ENCODE measurements at regions of chr3 and their contacts with region 1.

Region 1: GRCh38 chr3:132535575-132536441 is 61.3 kb upstream of the ACKR4 start:
- DNase-seq: peak; percentile 70 to 74
- ATAC-seq: peak; percentile 91
- H3K4me3 ChIP-seq: no peak overlapping the region
- H3K27ac ChIP-seq: peak overlapping the region in 1 of 2 donors; percentile 86
- H3K4me1 ChIP-seq: no peaks in the 10 kb centered on the region
- H3K27me3 ChIP-seq: no peaks in the 10 kb centered on the region

Region 2: GRCh38 chr3:132615881-132616280 is 80.1 kb after region 1 on chr3:
- intact Hi-C with region 1: no loop called
- DNase-seq: no peak
- ATAC-seq: no peak
- H3K4me3 ChIP-seq: no peak overlapping the region
- H3K27ac ChIP-seq: no peak overlapping the region
- H3K4me1 ChIP-seq: peaks cover 2 to 3% of the 10 kb centered on the region in 2 donors
- H3K27me3 ChIP-seq: no peaks in the 10 kb centered on the region

Region 3: DNA sequence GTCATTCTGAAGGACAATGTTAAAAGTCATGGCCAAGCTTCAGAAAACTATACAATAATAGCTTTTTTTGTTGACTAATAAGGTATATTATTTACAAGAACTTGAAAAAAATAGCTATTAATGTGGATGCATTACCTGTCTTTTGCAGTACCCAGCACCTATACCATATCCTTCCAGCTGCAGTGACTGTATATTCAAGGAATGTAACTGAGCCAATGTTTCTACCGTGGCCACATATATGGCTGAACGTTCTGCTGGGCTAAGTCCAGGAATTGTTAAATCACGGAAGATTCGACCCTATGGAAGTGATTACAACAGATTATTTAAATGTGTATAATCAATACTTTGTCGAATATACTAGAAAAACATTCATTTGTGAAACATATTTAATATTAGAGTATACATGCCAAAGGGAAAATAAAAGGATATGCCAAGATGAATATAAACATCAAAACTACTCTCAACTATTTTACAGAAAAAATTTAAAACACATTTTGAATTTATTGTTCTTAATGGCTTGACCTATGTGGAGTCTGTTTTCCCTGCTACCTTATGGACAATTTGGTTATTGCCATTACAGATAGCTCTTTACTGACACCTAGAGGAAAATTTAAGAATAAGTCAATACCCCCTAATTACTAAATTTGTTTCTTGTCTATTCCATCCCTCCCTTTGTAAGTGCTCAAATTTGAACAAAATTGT is 106.2 kb after region 1 on chr3:
- intact Hi-C with region 1: loop called (anchors 1 to 2 kb)
- DNase-seq: no peak
- ATAC-seq: peak; percentile 84
- H3K4me3 ChIP-seq: no peak overlapping the region
- H3K27ac ChIP-seq: no peak overlapping the region
- H3K4me1 ChIP-seq: no peaks in the 10 kb centered on the region
- H3K27me3 ChIP-seq: no peaks in the 10 kb centered on the region